Common myeloid progenitor, CD34-positive (primary cell): ENCODE measurements at regions of chr3 and their contacts with region 1.

Region 1: DNA sequence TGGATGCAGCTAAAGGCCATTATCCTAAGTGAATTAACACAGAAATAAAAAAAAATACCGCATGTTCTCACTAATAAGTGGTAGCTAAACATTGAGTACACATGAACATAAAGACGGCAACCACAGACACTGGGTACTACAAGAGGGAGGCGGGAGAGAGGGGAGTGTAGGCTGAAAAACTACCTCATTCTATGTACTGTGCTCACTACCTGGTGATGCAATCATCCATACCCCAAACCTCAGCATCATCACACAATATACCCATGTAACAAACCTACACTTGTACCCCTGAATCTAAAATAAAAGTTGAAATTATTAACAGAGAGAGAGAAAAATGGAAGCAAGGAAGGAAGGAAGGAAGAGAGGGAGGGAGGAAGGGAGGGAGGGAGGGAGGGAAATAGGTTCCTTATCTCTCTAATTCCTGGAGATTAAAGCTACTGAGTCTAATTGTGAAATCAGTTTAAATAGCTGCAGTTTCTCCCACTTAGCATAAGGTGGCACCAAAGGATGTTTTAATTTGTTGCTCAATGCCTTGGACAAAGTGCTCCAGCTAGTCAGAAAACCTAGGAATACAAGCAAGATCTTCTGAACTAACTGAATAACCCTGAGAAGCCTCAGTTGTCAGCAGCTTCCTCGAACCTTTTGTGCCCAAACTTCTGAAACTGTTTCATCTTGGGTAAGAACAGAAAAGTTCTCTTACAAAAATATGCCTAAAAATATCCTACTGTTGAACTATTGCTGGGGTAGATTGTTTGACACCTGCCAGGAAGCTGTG is 79.4 kb upstream of the ATP11B start:
- DNase-seq: peak; percentile 65 to 74 (median 72)
- H3K4me3 ChIP-seq: no peak overlapping the region
- H3K27ac ChIP-seq: no peak overlapping the region
- H3K4me1 ChIP-seq: peaks cover 2 to 14% (median 9%) of the 10 kb centered on the region in 4 experiments
- H3K27me3 ChIP-seq: no peaks in the 10 kb centered on the region

Region 2: DNA sequence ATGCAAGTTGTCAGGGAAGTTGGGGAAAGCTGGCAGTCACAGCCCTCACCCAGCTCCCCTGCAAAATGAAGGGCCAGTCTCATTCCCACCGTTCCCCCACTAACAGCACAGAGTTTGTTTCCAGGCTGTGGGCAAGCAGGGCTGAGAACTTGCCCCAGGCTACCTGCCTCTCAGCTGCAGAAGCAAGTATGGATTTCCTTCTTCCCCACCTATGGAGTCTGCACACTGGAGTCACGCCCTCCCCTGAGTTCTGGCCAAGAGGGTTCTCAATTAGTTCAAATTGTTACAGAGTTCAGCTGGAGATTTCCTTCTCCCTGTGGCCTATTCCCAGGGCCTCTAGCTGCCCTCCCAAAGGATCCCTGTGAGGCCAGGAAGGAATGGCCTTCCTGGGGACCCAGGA is 10.7 kb before region 1 on chr3:
- CTCF ChIA-PET with region 1: interaction called, 10 read pairs
- POLR2A ChIA-PET with region 1: no interaction called
- DNase-seq: no peak
- H3K4me3 ChIP-seq: no peak overlapping the region
- H3K27ac ChIP-seq: no peak overlapping the region
- H3K4me1 ChIP-seq: no peaks in the 10 kb centered on the region
- H3K27me3 ChIP-seq: no peaks in the 10 kb centered on the region

Region 3: DNA sequence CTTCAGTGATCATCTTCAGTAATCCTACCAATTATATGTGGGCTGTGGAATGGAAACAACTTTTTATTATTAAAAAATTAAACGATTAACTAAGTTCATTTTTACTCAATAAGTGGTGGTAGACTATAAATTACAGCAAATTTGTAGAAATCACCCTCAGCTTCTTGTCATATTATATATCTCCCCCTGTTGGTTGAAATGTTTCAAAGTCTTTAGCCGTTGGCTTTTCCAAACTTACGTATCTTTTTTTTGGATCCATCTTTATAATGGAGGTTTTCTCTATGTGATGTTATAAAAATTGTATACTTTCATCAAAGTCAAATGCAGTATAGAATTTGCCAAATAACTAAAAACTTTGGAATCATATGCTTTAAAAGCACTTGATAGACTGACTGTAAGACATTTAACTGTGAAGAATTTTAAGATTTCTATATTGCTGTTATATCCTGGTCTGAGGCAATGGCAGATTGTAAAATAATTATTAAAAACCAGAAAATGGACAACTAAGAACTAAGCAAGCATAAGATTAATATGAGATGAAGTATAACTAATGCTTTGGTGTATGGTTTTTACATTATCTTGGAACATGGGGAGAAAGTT is 124.0 kb after region 1 on chr3:
- CTCF ChIA-PET with region 1: interaction called, 67 read pairs
- POLR2A ChIA-PET with region 1: no interaction called
- DNase-seq: peak; percentile 42 to 66 (median 58)
- H3K4me3 ChIP-seq: no peak overlapping the region
- H3K27ac ChIP-seq: no peak overlapping the region
- H3K4me1 ChIP-seq: no peaks in the 10 kb centered on the region
- H3K27me3 ChIP-seq: no peaks in the 10 kb centered on the region

Region 4: GRCh38 chr3:182843478-182843877 is 129.5 kb after region 1 on chr3:
- CTCF ChIA-PET with region 1: interaction called, 67 read pairs
- POLR2A ChIA-PET with region 1: no interaction called
- DNase-seq: no peak
- H3K4me3 ChIP-seq: no peak overlapping the region
- H3K27ac ChIP-seq: no peak overlapping the region
- H3K4me1 ChIP-seq: no peaks in the 10 kb centered on the region
- H3K27me3 ChIP-seq: no peaks in the 10 kb centered on the region